ENCODE measurements at regions of chrX and their contacts with region 1.

Region 1: DNA sequence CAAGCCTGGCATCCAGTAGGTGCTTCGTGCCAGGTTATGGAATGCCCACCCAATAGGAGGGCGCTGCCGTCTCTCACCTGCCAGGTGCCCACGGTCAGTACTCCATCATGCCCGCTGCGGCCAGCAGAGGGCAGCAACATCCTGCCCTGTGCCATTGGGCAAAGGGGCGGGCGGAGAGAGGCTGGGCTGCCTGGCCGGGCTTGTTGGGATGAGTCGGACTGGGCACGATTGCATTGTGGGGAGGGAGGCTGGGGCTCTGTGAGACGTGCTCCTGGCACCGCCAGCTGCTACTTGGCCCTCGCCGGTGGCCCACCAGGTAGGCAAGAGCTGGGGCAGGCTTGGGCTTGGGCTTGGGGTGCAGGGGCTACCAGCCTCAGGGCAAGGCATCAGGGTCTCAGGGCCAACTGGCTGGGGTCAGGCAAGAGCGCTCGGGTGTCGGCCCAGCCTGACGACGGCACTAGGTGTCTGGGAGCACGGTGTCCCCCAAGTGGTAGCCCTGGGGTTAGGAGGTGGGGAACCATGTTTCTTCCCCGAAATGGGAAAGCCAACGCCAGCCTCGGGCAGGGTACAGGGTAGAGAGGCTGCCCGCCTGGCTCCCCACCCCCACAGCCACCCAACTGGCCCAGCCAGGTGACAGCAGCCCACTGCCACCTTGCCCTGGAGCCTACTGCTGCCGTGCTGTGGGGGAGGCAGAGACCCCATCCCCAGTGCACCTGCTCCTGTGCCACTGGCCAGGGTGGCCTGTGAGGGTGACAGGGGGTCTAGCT is at the start of gene PLXNB3:
- DNase-seq: peak; percentile 86 to 93 (median 90)
- H3K4me3 ChIP-seq: peak within 1 kb of the TSS in 1 of 4 donors; percentile 42
- H3K27ac ChIP-seq: peak within 1 kb of the TSS; percentile 7 to 87 (median 75)
- H3K4me1 ChIP-seq: peaks cover 0 to 18% of the 10 kb centered on the region in 2 donors
- H3K27me3 ChIP-seq: no peaks in the 10 kb centered on the region
- CTCF ChIP-seq: peak; percentile 61 to 91 (median 85)
- POLR2A ChIP-seq: peak in 1 of 2 donors; percentile 67
- total RNA-seq, gene PLXNB3: 1.1 to 103 (median 34.9) TPM

Region 2: GRCh38 chrX:153954558-153955227 is 190.5 kb after region 1 on chrX:
- intact Hi-C with region 1: loop called (anchors 5 kb)
- DNase-seq: no peak
- H3K4me3 ChIP-seq: no peak overlapping the region
- H3K27ac ChIP-seq: no peak overlapping the region
- H3K4me1 ChIP-seq: peaks cover 0 to 4% of the 10 kb centered on the region in 2 donors
- H3K27me3 ChIP-seq: no peaks in the 10 kb centered on the region
- CTCF ChIP-seq: no peak
- POLR2A ChIP-seq: no peak